Activated CD8-positive, alpha-beta T cell treated with anti-CD3 and anti-CD28 coated beads, Interleukin-2, amount 10 ng/mL, durations not matched to agents 7 days and 5 days (primary cell): ENCODE measurements at regions of chr2 and their contacts with region 1.

Region 1: GRCh38 chr2:112048887-112049286 is 6.2 kb upstream of the TMEM87B start:
- DNase-seq: peak; percentile 45
- ATAC-seq: peak; percentile 61
- H3K4me3 Mint-ChIP-seq: no peak overlapping the region
- H3K27ac Mint-ChIP-seq: no peak overlapping the region
- H3K4me1 Mint-ChIP-seq: peaks cover 7% of the 10 kb centered on the region
- H3K27me3 Mint-ChIP-seq: peaks cover 20% of the 10 kb centered on the region

Region 2: DNA sequence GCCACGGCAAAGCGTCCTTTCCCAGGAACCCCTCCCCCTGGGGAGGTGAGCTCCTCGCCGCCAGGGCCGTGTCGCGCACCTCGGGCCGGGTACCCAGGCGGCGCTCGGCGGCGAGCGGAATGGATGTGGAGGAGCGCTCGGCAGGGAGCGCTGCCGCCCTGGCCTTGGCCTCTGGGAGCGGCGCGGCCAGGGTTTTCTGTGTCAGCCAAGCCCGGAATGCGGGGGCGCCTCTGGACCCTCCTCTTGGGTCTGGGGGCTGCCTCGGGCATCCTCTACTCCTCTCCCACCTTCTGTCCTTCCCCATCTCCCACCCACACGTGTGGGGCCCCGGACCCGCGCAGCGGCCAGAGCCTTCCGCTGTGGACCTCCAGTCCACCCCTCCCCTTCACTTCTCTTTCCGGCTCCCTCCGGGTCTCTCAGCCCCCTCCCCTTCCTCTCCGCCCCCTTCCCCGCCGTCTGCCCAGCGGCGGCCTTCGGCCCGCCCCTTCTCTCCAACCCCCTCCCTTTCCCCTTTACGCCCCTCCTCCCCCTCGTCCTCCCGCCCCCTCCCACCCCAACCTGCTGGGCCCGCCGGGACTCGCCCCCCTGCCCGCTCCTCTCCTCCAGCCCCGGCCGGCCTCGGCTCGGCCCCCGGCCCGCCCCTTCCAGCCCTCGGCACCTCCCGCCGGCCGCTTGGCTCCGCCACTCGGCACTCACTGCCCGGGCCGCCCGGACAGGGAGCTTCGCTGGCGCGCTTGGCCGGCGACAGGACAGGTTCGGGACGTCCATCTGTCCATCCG is 150.8 kb before region 1 on chr2 and contains the start of gene MERTK:
- CTCF ChIA-PET with region 1: interaction called, 11 read pairs
- POLR2A ChIA-PET with region 1: no interaction called
- DNase-seq: peak; percentile 54
- ATAC-seq: peak; percentile 87
- H3K4me3 Mint-ChIP-seq: peak within 1 kb of the TSS; percentile 65
- H3K27ac Mint-ChIP-seq: peak within 1 kb of the TSS; percentile 32
- H3K4me1 Mint-ChIP-seq: peaks cover 14% of the 10 kb centered on the region
- H3K27me3 Mint-ChIP-seq: peaks cover 34% of the 10 kb centered on the region
- total RNA-seq, gene MERTK: 0.10 to 0.21 TPM

Region 3: GRCh38 chr2:112465382-112465781 is 416.5 kb after region 1 on chr2:
- CTCF ChIA-PET with region 1: no interaction called
- POLR2A ChIA-PET with region 1: no interaction called
- DNase-seq: no peak
- ATAC-seq: no peak
- H3K4me3 Mint-ChIP-seq: no peak overlapping the region
- H3K27ac Mint-ChIP-seq: no peak overlapping the region
- H3K4me1 Mint-ChIP-seq: no peaks in the 10 kb centered on the region
- H3K27me3 Mint-ChIP-seq: peaks cover 39% of the 10 kb centered on the region